GM10248 (cell line): ENCODE measurements at regions of chr3 and their contacts with region 1.

Region 1: DNA sequence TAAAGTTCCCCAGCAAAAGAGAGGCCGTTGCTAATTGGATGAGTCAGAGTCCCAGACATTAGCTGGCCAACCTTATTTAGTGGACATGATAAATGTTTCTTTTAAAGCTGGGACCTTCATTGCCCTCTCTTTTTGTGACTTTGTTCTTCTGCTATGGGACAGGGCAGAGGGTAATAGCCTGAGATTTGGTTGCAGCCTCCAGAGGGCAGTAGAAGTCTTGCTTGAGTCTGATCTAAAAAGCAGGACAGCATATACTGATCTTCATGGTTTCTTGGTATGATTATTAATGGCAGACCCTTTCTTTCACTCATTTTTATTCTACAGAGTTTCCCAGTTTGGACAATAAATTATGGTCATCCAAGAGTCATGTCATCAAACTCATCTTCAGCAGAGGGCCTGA is 25.1 kb upstream of the ZKSCAN7 start:
- DNase-seq: no peak
- CTCF ChIP-seq: peak; percentile 46

Region 2: DNA sequence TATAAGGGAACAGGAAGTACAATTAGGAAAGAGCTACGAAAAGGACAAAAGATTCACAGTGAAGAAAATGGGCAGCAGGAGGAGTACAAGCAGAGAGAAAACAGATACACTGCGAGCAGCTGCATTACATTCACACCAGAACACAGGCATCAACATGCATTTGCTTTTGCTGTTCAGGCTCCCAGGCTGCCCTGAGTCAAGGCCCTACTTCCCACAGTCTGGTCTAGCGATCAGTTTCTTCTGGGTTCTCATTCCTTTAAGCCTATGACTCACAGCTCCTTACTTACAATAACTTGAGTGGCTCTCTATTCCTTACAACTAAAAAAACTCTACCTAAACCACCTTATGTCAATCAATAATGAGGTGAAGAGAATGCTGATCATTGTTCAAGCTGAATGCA is 28.0 kb before region 1 on chr3:
- CTCF ChIA-PET with region 1: no interaction called
- POLR2A ChIA-PET with region 1: no interaction called
- DNase-seq: no peak
- CTCF ChIP-seq: no peak

Region 3: GRCh38 chr3:44518782-44519156 is 11.2 kb before region 1 on chr3:
- CTCF ChIA-PET with region 1: interaction called, 13 read pairs
- POLR2A ChIA-PET with region 1: no interaction called
- DNase-seq: no peak
- CTCF ChIP-seq: no peak

Region 4: DNA sequence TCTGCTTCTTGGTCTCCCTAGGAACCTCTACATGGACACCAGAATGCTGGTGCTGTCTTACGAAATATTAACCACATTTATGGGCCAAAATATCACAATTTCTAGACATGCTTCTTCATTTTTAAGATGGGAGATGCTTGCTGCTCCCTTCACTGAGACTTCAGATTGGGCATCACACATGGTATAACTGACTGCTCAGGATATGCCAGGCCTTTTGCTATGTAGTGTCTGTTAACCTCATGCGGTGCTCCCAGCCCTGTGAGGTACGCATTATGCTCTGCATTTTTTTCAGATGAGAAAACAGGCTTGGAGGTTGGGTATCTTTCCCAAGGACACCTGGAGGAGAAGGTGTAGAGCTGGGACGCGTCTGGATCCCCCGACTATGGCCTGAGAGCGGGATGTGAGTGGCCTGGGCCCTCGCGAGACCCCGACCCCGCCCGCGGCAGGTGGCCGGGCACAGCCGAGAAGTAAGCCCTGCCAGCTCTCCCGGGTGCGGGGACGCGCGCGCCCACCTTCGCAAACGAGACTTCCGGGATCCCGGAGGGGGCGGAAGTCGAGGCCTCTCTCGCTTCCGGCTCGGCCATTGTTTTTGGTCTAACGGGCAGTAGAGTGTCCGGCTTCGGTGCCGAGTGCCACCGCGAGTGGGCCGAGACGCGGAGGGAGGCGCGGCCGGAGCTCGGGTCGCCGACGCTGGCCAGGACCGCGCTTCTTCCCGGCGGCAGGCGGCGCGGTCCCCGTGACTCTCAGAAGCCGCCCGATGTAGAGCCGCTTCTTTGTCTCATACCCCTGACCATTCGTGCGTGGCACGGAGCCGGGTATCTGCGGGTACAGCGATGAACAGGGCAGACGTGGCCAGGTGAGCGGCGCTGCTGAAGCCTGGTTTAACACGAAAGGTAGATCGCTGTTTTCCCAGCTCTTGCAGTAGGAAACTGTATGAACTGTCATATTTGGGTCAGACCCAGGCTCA is 25.0 kb after region 1 on chr3 and contains the start of gene ZKSCAN7:
- CTCF ChIA-PET with region 1: interaction called, 10 read pairs
- POLR2A ChIA-PET with region 1: no interaction called
- DNase-seq: peak; percentile 84
- CTCF ChIP-seq: no peak

Region 5: GRCh38 chr3:44913868-44914468 is 384.0 kb after region 1 on chr3:
- CTCF ChIA-PET with region 1: interaction called, 95 read pairs
- POLR2A ChIA-PET with region 1: no interaction called
- DNase-seq: peak; percentile 77
- CTCF ChIP-seq: peak; percentile 83